ENCODE measurements at regions of chr1 and their contacts with region 1.

Region 1: GRCh38 chr1:15847100-15847892 is at the start of gene SPEN:
- DNase-seq: peak; percentile 97
- H3K4me3 ChIP-seq: peak within 1 kb of the TSS; percentile 71 to 100 (median 99)
- H3K27ac ChIP-seq: peak within 1 kb of the TSS; percentile 62
- H3K4me1 ChIP-seq: peaks cover 25% of the 10 kb centered on the region
- H3K27me3 ChIP-seq: no peaks in the 10 kb centered on the region
- CTCF ChIP-seq: no peak
- POLR2A ChIP-seq: peak; percentile 54
- total RNA-seq, gene SPEN: 40.3 and 44.4 TPM in 2 replicates

Region 2: GRCh38 chr1:15526490-15527339 is 320.6 kb before region 1 on chr1 and contains the start of gene DNAJC16:
- CTCF ChIA-PET with region 1: no interaction called
- POLR2A ChIA-PET with region 1: no interaction called
- dilution Hi-C with region 1: no loop called
- intact Hi-C with region 1: loop called (anchors 10 kb)
- DNase-seq: peak; percentile 100
- H3K4me3 ChIP-seq: peak within 1 kb of the TSS; percentile 52 to 87 (median 74)
- H3K27ac ChIP-seq: peak within 1 kb of the TSS; percentile 44
- H3K4me1 ChIP-seq: peaks cover 24% of the 10 kb centered on the region
- H3K27me3 ChIP-seq: no peaks in the 10 kb centered on the region
- CTCF ChIP-seq: peak in 1 of 2 donors; percentile 4
- POLR2A ChIP-seq: peak; percentile 90
- total RNA-seq, gene DNAJC16: 21.4 and 23.3 TPM in 2 replicates

Region 3: GRCh38 chr1:15803354-15803753 is 43.9 kb before region 1 on chr1:
- CTCF ChIA-PET with region 1: interaction called, 3 read pairs
- POLR2A ChIA-PET with region 1: interaction called, 3 read pairs
- dilution Hi-C with region 1: no loop called
- intact Hi-C with region 1: loop called (anchors 1 kb)
- DNase-seq: peak; percentile 45
- H3K4me3 ChIP-seq: no peak overlapping the region
- H3K27ac ChIP-seq: no peak overlapping the region
- H3K4me1 ChIP-seq: peaks cover 25% of the 10 kb centered on the region
- H3K27me3 ChIP-seq: no peaks in the 10 kb centered on the region
- CTCF ChIP-seq: peak in 1 of 2 donors; percentile 40
- POLR2A ChIP-seq: no peak

Region 4: DNA sequence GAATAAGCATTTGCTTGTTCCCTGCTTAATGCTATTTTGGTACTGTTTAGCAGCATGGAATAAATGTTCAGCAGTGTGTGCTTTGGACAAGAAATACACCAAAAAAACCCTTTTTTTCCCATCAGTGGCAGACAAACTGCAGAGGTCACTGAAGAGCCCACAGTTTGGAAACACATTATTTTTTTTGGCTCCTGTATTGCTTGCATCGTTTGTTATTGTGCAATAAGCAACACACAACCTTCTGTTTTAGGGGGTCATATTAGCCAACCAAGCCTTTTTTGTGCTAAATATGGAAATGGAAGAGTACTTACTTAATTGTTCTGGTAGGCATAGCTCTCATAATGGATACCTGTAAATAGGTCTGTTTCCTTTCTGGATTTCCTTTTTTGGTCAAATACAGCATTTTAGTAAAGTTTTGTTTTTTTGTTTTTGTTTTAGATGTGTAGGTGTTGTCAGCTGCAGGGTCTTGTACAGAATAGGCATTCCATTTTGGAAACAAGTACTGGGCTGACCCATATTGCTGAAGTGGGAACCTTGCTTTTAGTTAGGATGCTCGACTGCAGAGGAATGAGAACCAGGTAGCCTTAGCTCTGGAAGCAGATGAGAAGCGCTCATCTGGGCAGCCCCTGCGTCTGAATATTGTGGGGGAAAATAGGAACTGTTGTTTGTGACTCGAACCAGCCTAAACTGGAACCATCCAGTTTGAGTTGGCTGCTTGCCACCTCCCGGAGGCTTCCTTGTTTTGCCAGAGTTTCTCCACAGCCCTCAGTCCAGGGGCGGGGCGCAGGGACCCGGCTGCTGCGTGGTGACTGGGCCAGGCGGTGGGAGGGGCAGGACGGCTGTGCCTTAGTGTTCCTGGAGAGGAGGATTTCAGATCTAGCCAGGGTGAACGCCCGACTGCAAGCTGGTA is 38.7 kb after region 1 on chr1:
- CTCF ChIA-PET with region 1: no interaction called
- POLR2A ChIA-PET with region 1: interaction called, 4 read pairs
- dilution Hi-C with region 1: no loop called
- intact Hi-C with region 1: loop called (anchors 1 kb)
- DNase-seq: peak; percentile 97
- H3K4me3 ChIP-seq: peak overlapping the region; percentile 26 to 68 (median 29)
- H3K27ac ChIP-seq: peak overlapping the region; percentile 90
- H3K4me1 ChIP-seq: peaks cover 27% of the 10 kb centered on the region
- H3K27me3 ChIP-seq: no peaks in the 10 kb centered on the region
- CTCF ChIP-seq: no peak
- POLR2A ChIP-seq: peak; percentile 70

Region 5: DNA sequence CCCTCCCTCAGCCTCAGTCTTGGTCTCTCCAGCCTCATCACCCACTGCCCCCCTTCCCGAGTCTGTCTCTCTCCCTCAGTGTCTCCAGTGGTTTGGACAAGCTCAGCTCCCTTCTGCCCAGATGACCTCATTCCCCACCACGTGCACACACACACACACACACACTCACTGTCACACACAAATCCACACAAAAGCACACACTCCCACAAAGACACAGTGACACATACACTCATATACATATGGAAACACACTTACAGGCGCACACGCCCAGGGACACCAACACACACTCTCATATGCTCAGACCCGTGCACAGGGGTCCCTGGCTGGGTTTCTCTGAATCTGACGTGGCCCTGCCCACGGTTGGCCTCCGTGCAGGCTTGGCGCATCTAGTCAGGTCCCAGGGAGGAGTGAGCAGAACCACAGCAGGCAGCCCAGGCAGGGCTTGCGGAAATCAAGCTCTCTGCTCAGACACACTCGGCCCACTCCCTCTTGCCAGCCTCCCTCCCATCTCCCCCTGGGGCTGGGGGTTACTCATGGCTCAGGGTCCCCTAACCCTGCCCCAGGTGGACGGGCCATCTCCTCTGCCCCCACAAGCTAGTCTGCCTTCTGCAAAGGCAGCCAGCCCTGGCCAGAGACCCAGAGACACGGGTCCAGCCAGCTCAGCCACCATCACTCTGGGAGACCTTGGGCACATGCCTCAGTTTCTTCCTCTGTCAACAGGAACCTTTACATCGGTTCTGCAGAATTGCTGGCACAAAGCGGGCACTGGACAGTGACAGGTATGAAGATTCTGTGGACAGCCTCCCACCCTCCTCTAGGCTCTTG is 264.7 kb after region 1 on chr1:
- CTCF ChIA-PET with region 1: no interaction called
- POLR2A ChIA-PET with region 1: interaction called, 13 read pairs
- dilution Hi-C with region 1: no loop called
- intact Hi-C with region 1: no loop called
- DNase-seq: no peak
- H3K4me3 ChIP-seq: no peak overlapping the region
- H3K27ac ChIP-seq: no peak overlapping the region
- H3K4me1 ChIP-seq: peaks cover 3% of the 10 kb centered on the region
- H3K27me3 ChIP-seq: no peaks in the 10 kb centered on the region
- CTCF ChIP-seq: no peak
- POLR2A ChIP-seq: no peak

Measured in endothelial cell of umbilical vein (primary cell).